ENCODE measurements at regions of chr4 and their contacts with region 1.

Region 1: DNA sequence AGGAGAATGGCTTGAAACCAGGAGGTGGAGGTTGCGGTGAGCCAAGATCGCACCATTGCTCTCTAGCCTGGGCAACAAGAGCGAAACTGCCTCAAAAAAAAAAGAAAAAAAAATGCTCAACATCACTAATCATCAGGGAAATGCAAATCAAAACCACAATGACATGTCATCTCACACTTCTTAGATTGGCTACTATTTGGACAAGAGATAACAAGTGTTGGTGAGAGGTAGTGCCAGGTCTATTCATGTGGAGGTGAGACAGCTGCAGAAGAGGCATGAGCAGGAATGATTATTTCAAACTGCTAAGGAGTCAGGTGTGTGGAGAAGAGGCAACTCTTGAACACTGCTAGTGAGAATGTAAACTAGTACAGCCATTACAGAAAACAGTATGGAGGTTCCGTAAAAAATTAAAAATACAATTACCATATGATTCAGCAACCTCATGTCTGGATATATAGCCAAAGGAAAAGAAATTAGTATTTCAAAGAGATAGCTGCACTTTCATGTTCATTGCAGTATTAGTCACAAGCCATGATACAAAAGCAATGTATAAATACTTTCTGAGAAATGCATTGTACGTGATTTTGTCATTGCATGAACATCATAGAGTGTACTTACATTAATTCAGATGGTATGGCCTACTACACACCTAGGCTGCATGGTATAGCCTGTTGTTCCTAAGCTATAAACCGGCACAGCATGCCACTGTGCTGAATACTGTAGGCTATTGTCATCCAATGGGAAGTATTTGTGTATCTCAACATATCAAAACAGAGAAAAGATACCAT is 75.3 kb downstream of the TMEM144 start:
- DNase-seq: no peak
- H3K4me3 Mint-ChIP-seq: no peak overlapping the region
- H3K27ac Mint-ChIP-seq: no peak overlapping the region
- H3K4me1 Mint-ChIP-seq: peaks cover 6% of the 10 kb centered on the region
- H3K27me3 Mint-ChIP-seq: no peaks in the 10 kb centered on the region
- CTCF ChIP-seq: no peak

Region 2: GRCh38 chr4:158253350-158253980 is 32.2 kb before region 1 on chr4:
- CTCF ChIA-PET with region 1: no interaction called
- POLR2A ChIA-PET with region 1: no interaction called
- intact Hi-C with region 1: no loop called
- DNase-seq: peak; percentile 72
- H3K4me3 Mint-ChIP-seq: no peak overlapping the region
- H3K27ac Mint-ChIP-seq: no peak overlapping the region
- H3K4me1 Mint-ChIP-seq: no peaks in the 10 kb centered on the region
- H3K27me3 Mint-ChIP-seq: no peaks in the 10 kb centered on the region
- CTCF ChIP-seq: peak; percentile 62

Region 3: DNA sequence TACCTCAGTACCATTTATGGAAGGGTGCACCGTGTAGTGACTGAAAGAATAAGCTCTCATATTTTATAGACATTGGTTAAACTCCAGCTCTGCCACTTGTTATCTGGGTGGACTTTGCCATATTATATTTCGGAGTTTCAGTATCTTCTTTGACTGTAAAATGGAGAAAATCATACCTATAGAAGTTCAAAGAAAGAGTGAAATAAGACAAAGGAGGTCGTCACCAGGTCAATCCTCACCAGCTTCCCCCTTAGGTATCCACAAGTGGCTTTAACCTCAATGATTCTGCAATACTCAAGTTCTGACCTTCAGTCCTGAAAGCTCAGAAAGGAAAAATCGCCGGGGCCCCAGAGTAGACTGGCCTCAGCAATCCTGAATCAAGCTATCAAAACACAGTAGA is 11.0 kb before region 1 on chr4:
- CTCF ChIA-PET with region 1: interaction called, 10 read pairs
- POLR2A ChIA-PET with region 1: interaction called, 3 read pairs
- intact Hi-C with region 1: no loop called
- DNase-seq: no peak
- H3K4me3 Mint-ChIP-seq: no peak overlapping the region
- H3K27ac Mint-ChIP-seq: no peak overlapping the region
- H3K4me1 Mint-ChIP-seq: no peaks in the 10 kb centered on the region
- H3K27me3 Mint-ChIP-seq: no peaks in the 10 kb centered on the region
- CTCF ChIP-seq: no peak